Activated B cell treated with CpG ODN at 0.5 μM for 24 hours (primary cell): ENCODE measurements at regions of chr9 and their contacts with region 1.

Region 1: DNA sequence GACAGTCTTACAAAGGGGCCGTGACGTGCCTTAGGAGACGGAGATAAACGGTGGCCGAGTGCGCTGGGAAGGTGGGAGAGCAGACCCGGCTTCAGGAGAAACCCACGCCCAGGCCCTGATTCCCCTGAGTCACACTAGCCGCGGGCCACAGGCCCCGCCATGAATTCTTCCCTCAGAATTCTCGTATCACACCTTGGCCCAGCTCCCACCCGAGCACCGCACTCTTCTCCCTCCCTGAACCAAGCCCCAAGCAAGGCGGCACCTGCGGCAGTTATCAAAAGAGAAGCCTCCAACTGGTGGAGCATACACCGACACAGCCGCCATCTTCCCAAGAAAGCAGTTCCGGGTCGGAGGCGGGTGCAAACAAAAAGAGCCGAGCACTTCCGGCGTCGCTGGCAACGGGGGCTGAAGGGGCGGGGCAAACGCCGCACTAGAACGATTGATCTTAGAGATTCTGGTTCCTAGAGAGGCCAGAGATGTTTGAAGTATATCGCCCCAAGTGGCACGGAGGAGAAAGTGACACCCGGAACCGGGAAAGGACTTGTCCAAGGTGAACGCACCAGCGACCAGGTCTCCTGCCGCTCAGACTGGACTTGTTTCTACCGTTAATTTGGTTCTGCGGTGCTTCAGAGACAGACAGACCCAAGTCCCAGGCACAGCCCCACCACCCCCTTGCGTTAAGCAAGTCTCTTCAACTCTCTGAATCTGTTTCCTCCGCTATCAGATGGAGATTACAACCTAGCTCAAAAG is at the start of gene PSMB7:
- DNase-seq: peak; percentile 91
- ATAC-seq: peak; percentile 94
- H3K4me3 Mint-ChIP-seq: peak within 1 kb of the TSS; percentile 99
- H3K27ac Mint-ChIP-seq: peak within 1 kb of the TSS; percentile 94
- H3K4me1 Mint-ChIP-seq: peaks cover 25% of the 10 kb centered on the region
- H3K27me3 Mint-ChIP-seq: no peaks in the 10 kb centered on the region
- CTCF ChIP-seq: peak; percentile 38
- total RNA-seq, gene PSMB7: 120 and 140 TPM in 2 replicates

Region 2: DNA sequence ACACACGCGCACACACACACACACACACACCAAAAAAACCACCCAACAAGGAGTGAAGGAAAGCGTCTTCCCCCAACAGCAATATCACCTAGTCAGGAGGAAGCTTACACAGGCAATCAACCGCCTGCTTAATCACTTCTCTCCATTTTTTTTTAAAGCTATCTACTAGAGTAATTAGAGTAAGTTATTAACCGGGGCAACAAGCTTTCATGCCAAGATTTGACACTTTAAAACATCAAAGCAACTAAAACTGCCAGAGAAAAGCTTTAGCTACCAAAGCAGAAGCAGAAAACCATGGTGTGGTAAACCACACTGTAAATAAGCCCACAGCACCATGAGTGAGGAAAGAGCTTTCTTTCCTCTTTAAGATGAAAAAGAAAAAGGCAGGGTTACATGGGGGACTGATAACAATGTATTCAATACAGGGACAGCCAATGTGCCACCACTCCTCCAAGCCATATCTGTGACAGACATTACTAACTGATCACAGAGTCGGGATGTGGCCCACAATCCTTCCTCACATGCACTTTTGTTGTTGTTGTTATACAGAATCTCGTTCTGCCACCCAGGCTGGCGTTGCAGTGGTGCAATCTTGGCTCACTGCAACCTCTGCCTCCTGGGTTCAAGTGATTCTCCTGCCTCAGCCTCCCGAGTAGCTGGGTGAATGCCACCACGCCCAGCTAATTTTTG is 777.2 kb before region 1 on chr9:
- CTCF ChIA-PET with region 1: no interaction called
- POLR2A ChIA-PET with region 1: interaction called, 11 read pairs
- intact Hi-C with region 1: no loop called
- DNase-seq: no peak
- ATAC-seq: peak; percentile 31
- H3K4me3 Mint-ChIP-seq: peak overlapping the region; percentile 82
- H3K27ac Mint-ChIP-seq: peak overlapping the region; percentile 57
- H3K4me1 Mint-ChIP-seq: peaks cover 17% of the 10 kb centered on the region
- H3K27me3 Mint-ChIP-seq: no peaks in the 10 kb centered on the region
- CTCF ChIP-seq: no peak

Region 3: GRCh38 chr9:124381170-124381945 is 33.9 kb before region 1 on chr9:
- CTCF ChIA-PET with region 1: no interaction called
- POLR2A ChIA-PET with region 1: no interaction called
- intact Hi-C with region 1: no loop called
- DNase-seq: no peak
- ATAC-seq: no peak
- H3K4me3 Mint-ChIP-seq: no peak overlapping the region
- H3K27ac Mint-ChIP-seq: no peak overlapping the region
- H3K4me1 Mint-ChIP-seq: no peaks in the 10 kb centered on the region
- H3K27me3 Mint-ChIP-seq: no peaks in the 10 kb centered on the region
- CTCF ChIP-seq: no peak

Region 4: DNA sequence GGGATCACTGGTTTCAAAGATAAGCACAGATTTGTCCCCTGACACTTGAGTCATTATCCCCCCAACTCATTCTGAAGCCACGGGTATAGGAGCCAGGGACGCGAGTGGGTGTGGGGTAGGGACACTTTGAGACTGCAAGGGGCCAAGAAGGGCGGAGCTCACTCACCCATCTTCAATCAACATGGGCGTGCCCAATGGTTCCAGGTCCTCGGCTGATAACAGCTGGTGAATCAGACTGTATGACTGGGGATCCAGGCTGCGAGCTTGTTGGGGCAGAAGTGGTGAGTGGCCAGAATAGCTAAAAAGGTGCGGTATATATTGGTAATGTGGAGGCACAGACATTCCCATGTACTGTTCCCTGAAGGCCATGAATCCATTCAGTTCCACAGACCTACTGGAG is 122.6 kb after region 1 on chr9:
- CTCF ChIA-PET with region 1: interaction called, 5 read pairs
- POLR2A ChIA-PET with region 1: no interaction called
- intact Hi-C with region 1: loop called (anchors 1 kb)
- DNase-seq: no peak
- ATAC-seq: no peak
- H3K4me3 Mint-ChIP-seq: no peak overlapping the region
- H3K27ac Mint-ChIP-seq: no peak overlapping the region
- H3K4me1 Mint-ChIP-seq: no peaks in the 10 kb centered on the region
- H3K27me3 Mint-ChIP-seq: no peaks in the 10 kb centered on the region
- CTCF ChIP-seq: no peak